RWPE1 (cell line): ENCODE measurements at regions of chr16 and their contacts with region 1.

Region 1: DNA sequence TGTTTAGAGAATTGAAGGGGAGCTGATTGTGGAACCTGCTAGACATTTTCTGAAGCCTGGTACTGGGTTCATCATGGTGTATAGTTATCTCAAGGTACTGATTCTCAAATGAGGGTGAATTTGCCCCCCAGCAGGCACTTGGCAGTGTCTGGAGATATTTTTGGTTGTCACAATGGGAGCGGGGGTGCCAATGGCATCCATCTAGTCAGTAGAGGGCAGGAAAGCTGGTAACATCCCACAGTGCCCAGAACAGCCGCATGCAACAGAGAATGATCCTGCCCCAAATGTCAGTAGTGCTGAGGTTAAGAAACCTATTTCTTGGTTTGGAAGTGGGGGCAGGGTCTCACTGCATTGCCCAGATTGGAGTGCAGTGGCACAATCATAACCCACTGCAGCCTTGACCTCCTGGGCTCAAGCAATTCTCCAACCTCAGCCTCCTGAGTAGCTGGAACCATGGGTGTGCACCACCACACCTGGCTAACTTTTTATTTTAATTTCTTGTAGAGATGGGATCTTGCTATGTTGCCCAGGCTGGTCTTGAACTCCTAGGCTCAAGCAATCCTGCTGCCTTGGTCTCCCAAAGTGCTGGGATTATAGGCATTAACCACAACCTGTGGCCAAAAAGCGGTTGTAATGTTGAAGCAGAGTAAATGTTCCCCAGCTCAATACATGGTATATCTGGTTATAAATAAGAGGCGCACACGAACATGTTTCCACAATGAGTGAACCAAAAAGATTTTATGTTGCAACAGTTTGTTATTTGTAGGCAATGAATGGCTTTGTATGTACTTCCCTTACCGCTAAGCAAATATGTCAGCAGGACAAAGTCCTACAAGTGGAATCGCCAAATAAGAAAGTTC is 46.4 kb upstream of the EEF2KMT start:
- DNase-seq: no peak
- H3K27ac ChIP-seq: no peak overlapping the region
- CTCF ChIP-seq: no peak

Region 2: DNA sequence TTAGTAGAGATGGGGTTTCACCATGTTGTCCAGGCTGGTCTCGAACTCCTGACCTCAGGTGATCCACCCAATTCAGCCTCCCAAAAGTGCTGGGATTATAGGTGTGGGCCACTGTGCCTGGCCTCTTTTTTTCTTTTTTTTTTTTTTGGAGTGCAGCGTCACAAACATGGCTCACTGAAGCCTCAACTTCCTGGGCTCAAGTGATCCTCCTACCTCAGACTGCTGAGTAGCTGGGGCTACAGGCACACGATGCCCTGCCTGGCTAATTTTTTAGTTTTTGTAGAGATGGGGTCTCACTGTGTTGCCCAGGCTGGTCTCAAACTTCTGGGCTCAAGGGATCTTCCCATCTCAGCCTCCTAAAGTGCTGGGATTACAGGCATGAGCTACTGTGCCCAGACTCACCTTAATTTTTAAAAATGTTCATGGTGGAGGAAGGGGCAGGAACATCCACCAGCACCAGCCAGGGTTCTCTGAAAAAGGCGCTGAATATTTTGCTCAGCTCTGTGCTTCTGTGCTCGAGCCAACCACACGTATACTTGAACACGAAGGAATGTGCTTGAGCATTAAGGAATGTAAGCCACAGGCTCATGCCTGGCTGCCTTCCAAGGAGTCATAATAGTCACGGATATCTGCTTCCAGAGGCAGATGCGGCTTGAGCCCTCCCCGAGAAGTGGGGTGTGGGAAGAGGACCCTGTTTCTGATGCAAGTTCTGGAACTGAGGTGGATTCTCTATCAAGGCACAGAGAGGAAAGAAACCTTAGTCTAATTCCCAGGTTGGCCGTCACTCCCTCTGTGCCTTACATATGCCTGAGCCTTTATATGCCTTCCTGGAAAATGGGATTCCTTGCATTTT is 1198.0 kb before region 1 on chr16:
- CTCF ChIA-PET with region 1: no interaction called
- POLR2A ChIA-PET with region 1: no interaction called
- DNase-seq: peak; percentile 77
- H3K27ac ChIP-seq: peak overlapping the region; percentile 89
- CTCF ChIP-seq: no peak

Region 3: GRCh38 chr16:5158494-5158893 is 14.5 kb after region 1 on chr16:
- CTCF ChIA-PET with region 1: no interaction called
- POLR2A ChIA-PET with region 1: no interaction called
- DNase-seq: no peak
- H3K27ac ChIP-seq: no peak overlapping the region
- CTCF ChIP-seq: no peak

Region 4: GRCh38 chr16:6947291-6947690 is 1803.3 kb after region 1 on chr16:
- CTCF ChIA-PET with region 1: interaction called, 10 read pairs
- POLR2A ChIA-PET with region 1: no interaction called
- DNase-seq: no peak
- H3K27ac ChIP-seq: no peak overlapping the region
- CTCF ChIP-seq: no peak